CD8-positive, alpha-beta memory T cell (primary cell): ENCODE measurements at regions of chr12 and their contacts with region 1.

Region 1: DNA sequence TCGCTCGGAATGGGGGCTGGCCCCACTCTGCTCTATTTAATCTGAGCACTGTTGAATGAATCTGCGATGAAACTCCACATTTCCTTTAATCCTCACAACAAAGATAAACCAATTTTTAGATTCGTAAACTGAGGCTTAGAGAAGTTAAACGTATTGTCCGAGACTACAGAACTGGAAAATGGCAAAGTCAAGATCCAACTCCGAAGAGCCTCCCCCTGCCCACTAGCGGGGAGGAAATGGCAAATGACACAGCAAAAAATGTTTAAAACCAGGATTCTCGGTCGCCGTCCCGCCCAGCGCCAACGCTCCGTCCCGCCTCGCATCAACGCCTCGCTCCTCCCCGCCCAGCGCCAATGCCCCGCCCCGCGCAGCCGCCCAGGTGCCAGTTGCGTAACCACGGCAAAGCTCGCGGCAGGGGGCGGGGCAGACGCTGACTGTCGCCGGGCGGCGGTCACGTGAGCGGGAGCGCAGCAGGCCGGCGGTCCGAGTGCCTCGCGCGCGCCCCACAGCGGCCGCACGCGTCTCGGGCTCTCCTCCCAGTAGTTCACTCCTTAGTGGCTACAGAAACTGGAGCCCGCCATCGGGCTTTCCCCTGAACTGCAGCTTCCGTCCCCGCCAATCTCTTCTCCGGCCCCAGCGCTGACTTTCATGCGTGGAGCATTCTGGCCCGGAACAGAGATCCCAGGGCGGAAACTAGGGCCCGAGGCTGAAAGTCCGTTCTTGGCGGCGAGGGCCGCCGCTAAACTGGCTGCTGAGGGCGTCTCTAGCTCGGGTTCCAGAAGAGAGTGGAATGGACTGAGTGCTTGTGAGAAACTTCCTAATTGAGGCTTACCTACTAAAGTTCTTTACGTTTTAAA is 13.6 kb upstream of the LRRC23 start:
- DNase-seq: peak; percentile 97 to 100 (median 99)
- H3K4me3 ChIP-seq: peak overlapping the region; percentile 95
- H3K4me3 Mint-ChIP-seq: peak overlapping the region; percentile 81 to 93 (median 84)
- H3K27ac ChIP-seq: peak overlapping the region; percentile 92
- H3K27ac Mint-ChIP-seq: peak overlapping the region; percentile 89 to 98 (median 94)
- H3K4me1 ChIP-seq: peaks cover 12% of the 10 kb centered on the region
- H3K4me1 Mint-ChIP-seq: peaks cover 12 to 19% (median 12%) of the 10 kb centered on the region in 3 donors
- H3K27me3 ChIP-seq: no peaks in the 10 kb centered on the region
- H3K27me3 Mint-ChIP-seq: peaks cover 0 to 3% of the 10 kb centered on the region in 2 donors

Region 2: GRCh38 chr12:6904280-6905278 is 13.6 kb after region 1 on chr12 and contains the start of gene LRRC23:
- CTCF ChIA-PET with region 1: interaction called, 50 read pairs
- POLR2A ChIA-PET with region 1: interaction called, 5 read pairs
- DNase-seq: peak; percentile 97 to 99 (median 98)
- H3K4me3 ChIP-seq: peak within 1 kb of the TSS; percentile 86
- H3K4me3 Mint-ChIP-seq: peak within 1 kb of the TSS in 1 of 7 donors; percentile 19
- H3K27ac ChIP-seq: peak within 1 kb of the TSS; percentile 95
- H3K27ac Mint-ChIP-seq: peak within 1 kb of the TSS in 1 of 8 donors; percentile 78
- H3K4me1 ChIP-seq: peaks cover 16% of the 10 kb centered on the region
- H3K4me1 Mint-ChIP-seq: peaks cover 0 to 5% (median 0%) of the 10 kb centered on the region in 3 donors
- H3K27me3 ChIP-seq: no peaks in the 10 kb centered on the region
- H3K27me3 Mint-ChIP-seq: no peaks in the 10 kb centered on the region
- total RNA-seq, gene LRRC23: 4.9 to 5.0 TPM

Region 3: DNA sequence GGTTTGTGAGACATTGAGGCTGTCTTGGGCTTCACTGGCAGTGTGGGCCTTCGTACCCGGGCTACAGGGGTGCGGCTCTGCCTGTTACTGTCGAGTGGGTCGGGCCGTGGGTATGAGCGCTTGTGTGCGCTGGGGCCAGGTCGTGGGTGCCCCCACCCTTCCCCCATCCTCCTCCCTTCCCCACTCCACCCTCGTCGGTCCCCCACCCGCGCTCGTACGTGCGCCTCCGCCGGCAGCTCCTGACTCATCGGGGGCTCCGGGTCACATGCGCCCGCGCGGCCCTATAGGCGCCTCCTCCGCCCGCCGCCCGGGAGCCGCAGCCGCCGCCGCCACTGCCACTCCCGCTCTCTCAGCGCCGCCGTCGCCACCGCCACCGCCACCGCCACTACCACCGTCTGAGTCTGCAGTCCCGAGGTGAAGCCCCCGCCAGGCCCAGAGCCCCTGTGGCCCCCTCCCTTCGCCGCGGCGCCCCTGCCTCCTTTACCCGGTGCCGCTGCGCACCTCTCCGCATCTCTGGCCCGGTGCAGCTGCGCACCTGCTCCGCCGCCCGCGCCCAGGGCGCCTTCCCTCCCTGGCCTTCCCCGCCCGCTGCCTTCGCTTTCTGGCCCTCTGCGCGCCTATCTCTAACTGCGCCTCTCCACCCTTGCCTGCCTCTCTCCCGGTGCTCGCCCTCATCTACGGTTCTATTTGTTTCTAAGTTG is 23.4 kb after region 1 on chr12 and contains the start of gene ENO2:
- CTCF ChIA-PET with region 1: interaction called, 12 read pairs
- POLR2A ChIA-PET with region 1: interaction called, 13 read pairs
- DNase-seq: peak; percentile 79 to 94 (median 87)
- H3K4me3 ChIP-seq: peak within 1 kb of the TSS; percentile 69
- H3K4me3 Mint-ChIP-seq: peak within 1 kb of the TSS; percentile 89 to 99 (median 94)
- H3K27ac ChIP-seq: peak within 1 kb of the TSS; percentile 66
- H3K27ac Mint-ChIP-seq: peak within 1 kb of the TSS; percentile 94 to 99 (median 96)
- H3K4me1 ChIP-seq: peaks cover 21% of the 10 kb centered on the region
- H3K4me1 Mint-ChIP-seq: peaks cover 21 to 44% (median 30%) of the 10 kb centered on the region in 3 donors
- H3K27me3 ChIP-seq: no peaks in the 10 kb centered on the region
- H3K27me3 Mint-ChIP-seq: no peaks in the 10 kb centered on the region
- total RNA-seq, gene ENO2: 125 to 131 TPM